ENCODE measurements at regions of chr4 and their contacts with region 1.

Region 1: DNA sequence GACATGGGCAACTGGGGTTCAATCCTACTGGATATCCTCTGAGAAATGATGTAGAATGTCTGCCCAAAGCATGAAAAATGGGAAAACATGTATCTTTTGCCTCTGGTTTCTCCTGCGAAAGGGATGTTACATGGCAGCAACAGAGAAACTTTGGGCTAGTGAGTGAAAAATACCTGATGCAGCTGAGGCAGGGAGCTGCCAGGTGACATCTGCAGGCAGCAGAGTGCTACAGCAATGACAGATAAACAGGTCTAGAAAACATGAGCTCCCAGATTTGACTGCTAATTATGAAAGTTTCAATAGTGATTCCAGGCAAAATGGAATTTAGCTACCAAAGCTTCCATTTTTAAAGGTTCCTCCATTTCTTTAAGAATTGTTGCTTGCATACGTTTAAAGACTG is 4.8 kb upstream of the CXCL1 start:
- DNase-seq: peak; percentile 64
- H3K4me3 Mint-ChIP-seq: no peak overlapping the region
- H3K27ac Mint-ChIP-seq: no peak overlapping the region
- H3K4me1 Mint-ChIP-seq: peaks cover 29% of the 10 kb centered on the region
- H3K27me3 Mint-ChIP-seq: no peaks in the 10 kb centered on the region
- CTCF ChIP-seq: peak; percentile 74

Region 2: GRCh38 chr4:73662709-73663546 is 201.4 kb before region 1 on chr4:
- CTCF ChIA-PET with region 1: interaction called, 183 read pairs
- POLR2A ChIA-PET with region 1: interaction called, 40 read pairs
- intact Hi-C with region 1: loop called (anchors 1 kb)
- DNase-seq: peak; percentile 70
- H3K4me3 Mint-ChIP-seq: no peak overlapping the region
- H3K27ac Mint-ChIP-seq: peak overlapping the region; percentile 23
- H3K4me1 Mint-ChIP-seq: peaks cover 7% of the 10 kb centered on the region
- H3K27me3 Mint-ChIP-seq: no peaks in the 10 kb centered on the region
- CTCF ChIP-seq: peak; percentile 64

Region 3: DNA sequence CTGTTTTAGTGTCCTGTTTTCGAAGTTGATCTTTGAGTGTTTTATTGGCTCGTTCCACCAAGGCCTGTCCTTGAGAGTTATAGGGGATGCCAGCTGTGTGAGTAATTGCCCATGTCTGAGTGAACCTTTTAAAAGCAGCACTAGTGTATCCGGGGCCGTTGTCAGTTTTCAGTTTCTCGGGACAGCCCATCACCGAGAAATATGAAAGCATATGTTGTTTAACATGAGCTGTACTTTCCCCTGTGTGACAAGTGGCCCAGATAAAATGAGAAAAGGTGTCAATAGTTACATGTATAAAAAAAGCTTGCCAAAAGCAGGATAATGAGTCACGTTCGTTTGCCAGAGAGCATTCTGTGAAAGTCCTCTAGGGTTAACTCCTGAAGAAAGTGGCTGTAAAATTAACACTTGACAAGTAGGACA is 195.6 kb before region 1 on chr4:
- CTCF ChIA-PET with region 1: interaction called, 183 read pairs
- POLR2A ChIA-PET with region 1: interaction called, 40 read pairs
- intact Hi-C with region 1: no loop called
- DNase-seq: no peak
- H3K4me3 Mint-ChIP-seq: no peak overlapping the region
- H3K27ac Mint-ChIP-seq: no peak overlapping the region
- H3K4me1 Mint-ChIP-seq: peaks cover 7% of the 10 kb centered on the region
- H3K27me3 Mint-ChIP-seq: no peaks in the 10 kb centered on the region
- CTCF ChIP-seq: no peak

Region 4: DNA sequence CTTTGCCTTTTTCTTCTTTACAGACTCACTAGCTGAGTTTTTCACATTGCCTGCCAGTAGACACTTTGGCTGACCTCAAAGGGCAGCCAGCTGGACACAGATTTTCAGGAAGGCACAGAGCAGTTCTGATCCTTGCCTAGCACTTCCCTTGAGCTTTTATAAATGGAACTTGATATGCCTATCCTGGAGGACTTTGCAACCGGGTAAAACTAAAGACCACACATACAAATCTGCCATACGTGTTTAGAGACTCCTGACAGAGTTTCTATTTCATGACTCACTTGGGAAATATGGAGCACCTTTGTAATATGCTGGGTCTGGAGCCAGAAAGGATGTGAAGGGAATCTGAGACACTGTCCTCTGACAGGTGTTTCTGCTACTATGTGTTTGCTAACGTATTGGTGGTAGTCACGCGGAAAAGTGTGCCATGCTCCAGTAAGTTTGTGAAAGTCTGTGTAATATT is 187.5 kb before region 1 on chr4:
- CTCF ChIA-PET with region 1: interaction called, 35 read pairs
- POLR2A ChIA-PET with region 1: interaction called, 5 read pairs
- intact Hi-C with region 1: no loop called
- DNase-seq: peak; percentile 93
- H3K4me3 Mint-ChIP-seq: no peak overlapping the region
- H3K27ac Mint-ChIP-seq: peak overlapping the region; percentile 39
- H3K4me1 Mint-ChIP-seq: peaks cover 28% of the 10 kb centered on the region
- H3K27me3 Mint-ChIP-seq: no peaks in the 10 kb centered on the region
- CTCF ChIP-seq: no peak

Region 5: GRCh38 chr4:73698217-73698616 is 166.1 kb before region 1 on chr4:
- CTCF ChIA-PET with region 1: interaction called, 12 read pairs
- POLR2A ChIA-PET with region 1: interaction called, 8 read pairs
- intact Hi-C with region 1: no loop called
- DNase-seq: peak; percentile 57
- H3K4me3 Mint-ChIP-seq: no peak overlapping the region
- H3K27ac Mint-ChIP-seq: no peak overlapping the region
- H3K4me1 Mint-ChIP-seq: peaks cover 25% of the 10 kb centered on the region
- H3K27me3 Mint-ChIP-seq: no peaks in the 10 kb centered on the region
- CTCF ChIP-seq: no peak

Region 6: GRCh38 chr4:73853246-73853704 is 11.1 kb before region 1 on chr4 and contains the start of gene PF4V1:
- CTCF ChIA-PET with region 1: interaction called, 25 read pairs
- POLR2A ChIA-PET with region 1: interaction called, 7 read pairs
- intact Hi-C with region 1: no loop called
- DNase-seq: no peak
- H3K4me3 Mint-ChIP-seq: no peak within 1 kb of the TSS
- H3K27ac Mint-ChIP-seq: no peak within 1 kb of the TSS
- H3K4me1 Mint-ChIP-seq: peaks cover 9% of the 10 kb centered on the region
- H3K27me3 Mint-ChIP-seq: no peaks in the 10 kb centered on the region
- CTCF ChIP-seq: no peak
- total RNA-seq, gene PF4V1: not detected in 2 replicates

Region 7: DNA sequence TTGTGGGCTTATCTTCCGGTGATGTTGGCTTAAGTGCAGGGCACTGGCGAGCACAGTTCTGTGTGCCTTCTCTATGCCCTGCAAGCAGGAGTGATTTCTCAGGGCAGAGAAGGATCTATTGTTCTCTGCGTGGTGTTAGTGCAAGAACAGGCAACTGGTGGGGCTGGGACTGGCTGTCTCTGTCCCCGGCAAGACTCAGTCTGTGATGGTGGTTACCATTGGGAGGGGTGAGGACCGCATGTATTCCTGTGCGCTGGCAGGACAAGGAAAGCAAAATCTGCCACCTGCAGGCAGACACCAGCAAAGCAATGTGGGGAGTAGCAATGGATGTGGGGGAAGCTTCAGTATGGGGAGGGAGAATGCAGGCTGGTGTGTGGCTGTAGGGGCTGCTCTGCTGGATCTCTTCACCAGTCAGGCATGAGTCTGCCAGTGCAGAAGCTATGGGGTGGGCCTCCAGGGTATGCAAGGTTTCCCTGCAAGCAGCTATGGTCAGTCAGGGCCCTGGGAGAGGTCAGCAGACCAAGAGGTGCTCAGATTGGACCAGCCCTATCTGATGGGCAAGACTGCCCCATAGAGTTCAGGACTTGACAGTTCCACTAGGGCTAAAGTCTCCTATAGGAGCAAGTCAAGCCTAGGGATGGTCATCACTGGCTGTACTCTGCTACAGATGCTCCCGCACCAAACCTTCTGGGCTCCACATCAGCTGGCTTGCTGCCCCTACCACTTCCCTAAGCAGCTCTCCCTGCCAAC is 100.7 kb after region 1 on chr4:
- CTCF ChIA-PET with region 1: no interaction called
- POLR2A ChIA-PET with region 1: no interaction called
- intact Hi-C with region 1: no loop called
- DNase-seq: peak; percentile 3
- H3K4me3 Mint-ChIP-seq: no peak overlapping the region
- H3K27ac Mint-ChIP-seq: no peak overlapping the region
- H3K4me1 Mint-ChIP-seq: no peaks in the 10 kb centered on the region
- H3K27me3 Mint-ChIP-seq: no peaks in the 10 kb centered on the region
- CTCF ChIP-seq: no peak

Measured in MCF 10A (cell line).